Ovary (tissue), 10 donors: ENCODE measurements at regions of chr6 and their contacts with region 1.

Region 1: GRCh38 chr6:79078075-79079025 is at the start of gene PHIP:
- DNase-seq: peak; percentile 90 to 94 (median 94)
- H3K4me3 ChIP-seq: peak within 1 kb of the TSS; percentile 97
- H3K27ac ChIP-seq: peak within 1 kb of the TSS; percentile 96 to 97
- H3K4me1 ChIP-seq: no peaks in the 10 kb centered on the region
- H3K27me3 ChIP-seq: no peaks in the 10 kb centered on the region
- CTCF ChIP-seq: no peak
- EP300 ChIP-seq: no peak
- POLR2A ChIP-seq: peak; percentile 57
- total RNA-seq, gene PHIP: 25.3 to 38.5 (median 30.2) TPM

Region 2: GRCh38 chr6:79233611-79234149 is 155.3 kb after region 1 on chr6:
- intact Hi-C with region 1: loop called in 1 of 4 experiments (anchors 5 kb)
- DNase-seq: peak; percentile 76 to 86 (median 78)
- H3K4me3 ChIP-seq: peak overlapping the region; percentile 86
- H3K27ac ChIP-seq: peak overlapping the region; percentile 50 to 80
- H3K4me1 ChIP-seq: peaks cover 6% of the 10 kb centered on the region
- H3K27me3 ChIP-seq: no peaks in the 10 kb centered on the region
- CTCF ChIP-seq: peak in 1 of 3 donors; percentile 53
- EP300 ChIP-seq: no peak
- POLR2A ChIP-seq: peak; percentile 16